ENCODE measurements at regions of chr9 and their contacts with region 1.

Region 1: GRCh38 chr9:75088260-75088905 is at the start of gene OSTF1:
- DNase-seq: peak; percentile 93
- ATAC-seq: peak; percentile 87
- H3K4me3 Mint-ChIP-seq: peak within 1 kb of the TSS; percentile 96
- H3K27ac Mint-ChIP-seq: peak within 1 kb of the TSS; percentile 88
- H3K4me1 Mint-ChIP-seq: peaks cover 51% of the 10 kb centered on the region
- H3K27me3 Mint-ChIP-seq: no peaks in the 10 kb centered on the region
- CTCF ChIP-seq: no peak
- total RNA-seq, gene OSTF1: 59.7 and 60.1 TPM in 2 replicates

Region 2: GRCh38 chr9:74496819-74497747 is 591.3 kb before region 1 on chr9 and contains the start of gene RORB:
- CTCF ChIA-PET with region 1: no interaction called
- POLR2A ChIA-PET with region 1: no interaction called
- intact Hi-C with region 1: loop called (anchors 5 kb)
- DNase-seq: peak; percentile 28
- ATAC-seq: peak; percentile 91
- H3K4me3 Mint-ChIP-seq: peak within 1 kb of the TSS; percentile 88
- H3K27ac Mint-ChIP-seq: no peak within 1 kb of the TSS
- H3K4me1 Mint-ChIP-seq: peaks cover 36% of the 10 kb centered on the region
- H3K27me3 Mint-ChIP-seq: peaks cover 52% of the 10 kb centered on the region
- CTCF ChIP-seq: no peak
- total RNA-seq, gene RORB: not detected in 2 replicates

Region 3: GRCh38 chr9:74865177-74865576 is 223.2 kb before region 1 on chr9:
- CTCF ChIA-PET with region 1: no interaction called
- POLR2A ChIA-PET with region 1: interaction called, 3 read pairs
- intact Hi-C with region 1: loop called (anchors 2 kb)
- DNase-seq: no peak
- ATAC-seq: peak; percentile 89
- H3K4me3 Mint-ChIP-seq: peak overlapping the region; percentile 33
- H3K27ac Mint-ChIP-seq: peak overlapping the region; percentile 38
- H3K4me1 Mint-ChIP-seq: peaks cover 22% of the 10 kb centered on the region
- H3K27me3 Mint-ChIP-seq: peaks cover 4% of the 10 kb centered on the region
- CTCF ChIP-seq: no peak

Region 4: GRCh38 chr9:74973714-74974113 is 114.7 kb before region 1 on chr9:
- CTCF ChIA-PET with region 1: no interaction called
- POLR2A ChIA-PET with region 1: no interaction called
- intact Hi-C with region 1: no loop called
- DNase-seq: no peak
- ATAC-seq: no peak
- H3K4me3 Mint-ChIP-seq: no peak overlapping the region
- H3K27ac Mint-ChIP-seq: no peak overlapping the region
- H3K4me1 Mint-ChIP-seq: peaks cover 26% of the 10 kb centered on the region
- H3K27me3 Mint-ChIP-seq: no peaks in the 10 kb centered on the region
- CTCF ChIP-seq: no peak

Region 5: GRCh38 chr9:75053869-75054268 is 34.5 kb before region 1 on chr9:
- CTCF ChIA-PET with region 1: interaction called, 3 read pairs
- POLR2A ChIA-PET with region 1: interaction called, 15 read pairs
- intact Hi-C with region 1: loop called (anchors 1 kb)
- DNase-seq: peak; percentile 43
- ATAC-seq: peak; percentile 99
- H3K4me3 Mint-ChIP-seq: peak overlapping the region; percentile 59
- H3K27ac Mint-ChIP-seq: peak overlapping the region; percentile 74
- H3K4me1 Mint-ChIP-seq: peaks cover 30% of the 10 kb centered on the region
- H3K27me3 Mint-ChIP-seq: no peaks in the 10 kb centered on the region
- CTCF ChIP-seq: no peak

Region 6: DNA sequence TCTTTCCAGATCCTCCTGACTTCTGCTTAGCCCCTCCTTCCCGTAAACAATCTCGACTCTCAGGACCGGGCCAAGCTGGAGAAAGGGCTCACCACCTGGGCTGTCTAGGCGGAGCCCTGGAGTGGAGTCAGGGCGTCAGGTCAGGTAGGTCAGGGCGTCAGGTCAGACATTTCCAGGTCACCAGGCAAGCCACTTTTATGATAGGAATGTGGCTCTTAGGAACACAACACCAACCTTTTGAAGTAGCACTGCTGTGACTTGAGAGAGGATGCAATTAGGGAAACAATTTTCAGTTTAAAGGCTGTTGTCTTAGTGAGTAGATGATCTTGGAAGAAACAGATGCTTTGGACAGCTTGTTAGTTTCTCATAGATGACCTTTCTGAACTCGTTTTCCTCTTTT is 12.7 kb after region 1 on chr9:
- CTCF ChIA-PET with region 1: no interaction called
- POLR2A ChIA-PET with region 1: no interaction called
- intact Hi-C with region 1: no loop called
- DNase-seq: no peak
- ATAC-seq: no peak
- H3K4me3 Mint-ChIP-seq: no peak overlapping the region
- H3K27ac Mint-ChIP-seq: peak overlapping the region; percentile 16
- H3K4me1 Mint-ChIP-seq: peaks cover 41% of the 10 kb centered on the region
- H3K27me3 Mint-ChIP-seq: no peaks in the 10 kb centered on the region
- CTCF ChIP-seq: no peak